ENCODE measurements at regions of chr12 and their contacts with region 1.

Region 1: GRCh38 chr12:49740930-49741881 is at the start of gene TMBIM6:
- DNase-seq: peak; percentile 100
- H3K4me3 Mint-ChIP-seq: peak within 1 kb of the TSS; percentile 99
- H3K27ac Mint-ChIP-seq: peak within 1 kb of the TSS; percentile 100
- H3K4me1 Mint-ChIP-seq: peaks cover 39% of the 10 kb centered on the region
- H3K27me3 Mint-ChIP-seq: no peaks in the 10 kb centered on the region
- total RNA-seq, gene TMBIM6: 481 to 486 TPM

Region 2: GRCh38 chr12:49264738-49265515 is 476.3 kb before region 1 on chr12 and contains the start of gene TUBA1C:
- CTCF ChIA-PET with region 1: no interaction called
- POLR2A ChIA-PET with region 1: interaction called, 3 read pairs
- intact Hi-C with region 1: loop called (anchors 10 kb)
- DNase-seq: peak; percentile 93
- H3K4me3 Mint-ChIP-seq: peak within 1 kb of the TSS; percentile 99
- H3K27ac Mint-ChIP-seq: peak within 1 kb of the TSS; percentile 99
- H3K4me1 Mint-ChIP-seq: peaks cover 47% of the 10 kb centered on the region
- H3K27me3 Mint-ChIP-seq: no peaks in the 10 kb centered on the region
- total RNA-seq, gene TUBA1C: 353 to 360 TPM

Region 3: GRCh38 chr12:49623142-49623904 is 117.9 kb before region 1 on chr12 and contains the start of gene PRPF40B:
- CTCF ChIA-PET with region 1: interaction called, 9 read pairs
- POLR2A ChIA-PET with region 1: interaction called, 11 read pairs
- intact Hi-C with region 1: no loop called
- DNase-seq: peak; percentile 91
- H3K4me3 Mint-ChIP-seq: peak within 1 kb of the TSS; percentile 78
- H3K27ac Mint-ChIP-seq: peak within 1 kb of the TSS; percentile 73
- H3K4me1 Mint-ChIP-seq: peaks cover 20% of the 10 kb centered on the region
- H3K27me3 Mint-ChIP-seq: peaks cover 3% of the 10 kb centered on the region
- total RNA-seq, gene PRPF40B: 6.2 to 8.9 TPM

Region 4: DNA sequence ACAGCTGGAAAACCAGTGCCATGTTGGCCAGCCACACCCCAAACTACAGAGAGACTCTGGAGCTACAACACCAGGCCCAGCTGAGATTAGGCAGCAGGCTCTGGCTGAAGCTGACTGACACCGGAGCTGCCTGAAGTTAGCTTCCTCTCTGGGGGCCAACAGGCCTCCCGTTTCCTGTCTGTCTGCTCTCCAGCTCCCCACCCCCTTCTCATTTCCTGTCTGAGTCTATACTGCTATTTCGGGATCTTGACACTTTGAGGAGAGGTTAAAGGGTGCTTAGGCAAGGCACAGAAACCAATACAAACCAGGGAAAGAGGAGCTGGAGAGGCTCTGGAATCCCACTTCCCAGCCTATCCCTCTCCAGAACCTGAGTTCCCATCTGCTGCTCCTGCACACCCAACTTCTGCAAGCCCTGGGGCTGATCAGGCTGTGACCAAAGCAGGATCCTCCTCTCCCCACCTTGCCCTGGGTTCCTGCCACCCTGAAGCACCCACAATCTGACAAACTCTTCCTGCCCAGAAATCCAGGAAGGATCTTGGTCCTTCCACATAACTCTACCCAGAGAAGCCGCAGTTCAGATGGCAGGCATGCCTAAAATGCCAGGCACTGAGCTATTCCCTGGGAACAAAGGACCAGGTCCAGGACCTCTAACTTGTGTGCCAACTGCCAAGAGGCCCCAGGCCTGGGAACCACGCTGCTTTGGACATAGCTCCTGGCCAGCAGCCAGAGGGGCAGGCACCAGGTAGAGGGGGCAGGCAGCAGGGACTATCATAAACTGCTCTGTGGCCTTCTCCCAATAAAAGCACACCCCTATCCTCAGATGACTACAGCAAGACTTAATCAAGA is 78.0 kb before region 1 on chr12:
- CTCF ChIA-PET with region 1: interaction called, 12 read pairs
- POLR2A ChIA-PET with region 1: interaction called, 4 read pairs
- intact Hi-C with region 1: no loop called
- DNase-seq: peak; percentile 86
- H3K4me3 Mint-ChIP-seq: peak overlapping the region; percentile 67
- H3K27ac Mint-ChIP-seq: peak overlapping the region; percentile 95
- H3K4me1 Mint-ChIP-seq: peaks cover 70% of the 10 kb centered on the region
- H3K27me3 Mint-ChIP-seq: no peaks in the 10 kb centered on the region

Region 5: GRCh38 chr12:49707128-49707811 is 33.9 kb before region 1 on chr12 and contains the start of gene FMNL3:
- CTCF ChIA-PET with region 1: interaction called, 15 read pairs
- POLR2A ChIA-PET with region 1: interaction called, 33 read pairs
- intact Hi-C with region 1: loop called (anchors 1 kb)
- DNase-seq: peak; percentile 98
- H3K4me3 Mint-ChIP-seq: peak within 1 kb of the TSS; percentile 85
- H3K27ac Mint-ChIP-seq: peak within 1 kb of the TSS; percentile 72
- H3K4me1 Mint-ChIP-seq: peaks cover 43% of the 10 kb centered on the region
- H3K27me3 Mint-ChIP-seq: peaks cover 3% of the 10 kb centered on the region
- total RNA-seq, gene FMNL3: 31.2 to 31.9 TPM

Region 6: GRCh38 chr12:49776413-49776812 is 35.2 kb after region 1 on chr12:
- CTCF ChIA-PET with region 1: interaction called, 79 read pairs
- POLR2A ChIA-PET with region 1: interaction called, 6 read pairs
- intact Hi-C with region 1: loop called (anchors 1 kb)
- DNase-seq: peak; percentile 79
- H3K4me3 Mint-ChIP-seq: no peak overlapping the region
- H3K27ac Mint-ChIP-seq: no peak overlapping the region
- H3K4me1 Mint-ChIP-seq: peaks cover 13% of the 10 kb centered on the region
- H3K27me3 Mint-ChIP-seq: peaks cover 14% of the 10 kb centered on the region

Region 7: DNA sequence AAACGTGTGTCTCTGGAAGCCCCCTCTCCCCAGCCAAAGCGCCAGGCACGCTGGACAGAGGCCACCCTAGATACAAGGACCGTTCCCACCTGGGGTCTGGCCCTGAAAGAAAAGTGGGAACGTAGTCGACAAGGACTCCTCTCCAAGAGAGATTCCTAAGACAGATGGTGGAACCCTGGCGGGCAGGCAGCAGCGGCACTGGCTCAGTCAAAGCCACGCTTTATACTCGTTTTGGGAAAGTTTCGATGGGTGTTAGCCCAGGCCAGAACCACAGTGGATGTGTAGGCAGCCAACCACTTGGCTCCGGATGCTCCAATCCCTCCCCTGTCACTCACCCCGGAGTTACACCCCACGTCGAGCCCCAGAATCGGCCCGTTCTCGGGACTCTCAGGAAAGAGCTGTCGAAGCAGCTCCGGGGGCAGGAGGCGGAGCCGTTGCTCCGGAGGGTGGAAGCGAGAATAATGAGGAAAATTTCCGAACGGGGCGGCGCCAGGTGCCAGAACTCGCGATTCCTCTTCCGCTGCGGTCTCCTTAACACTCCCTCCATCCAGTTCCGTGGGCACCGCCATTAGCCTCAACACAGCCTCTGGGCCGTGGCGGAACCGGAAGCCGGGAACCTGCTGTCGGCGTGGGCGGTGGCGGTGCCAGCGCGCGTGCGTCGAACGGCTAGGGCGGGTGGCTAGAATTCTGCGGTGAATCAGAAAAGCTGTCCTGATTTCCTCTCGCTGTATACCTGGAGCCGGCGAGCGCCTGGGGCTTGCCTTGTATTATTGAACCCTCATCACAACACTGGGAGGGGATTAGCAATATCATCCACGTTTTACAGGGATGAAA is 101.5 kb after region 1 on chr12 and contains the start of gene BCDIN3D:
- CTCF ChIA-PET with region 1: interaction called, 31 read pairs
- POLR2A ChIA-PET with region 1: interaction called, 12 read pairs
- intact Hi-C with region 1: loop called (anchors 2 kb)
- DNase-seq: peak; percentile 97
- H3K4me3 Mint-ChIP-seq: peak within 1 kb of the TSS; percentile 90
- H3K27ac Mint-ChIP-seq: peak within 1 kb of the TSS; percentile 94
- H3K4me1 Mint-ChIP-seq: peaks cover 33% of the 10 kb centered on the region
- H3K27me3 Mint-ChIP-seq: no peaks in the 10 kb centered on the region
- total RNA-seq, gene BCDIN3D: 5.8 to 6.1 TPM

Region 8: GRCh38 chr12:49959570-49960465 is 218.6 kb after region 1 on chr12:
- CTCF ChIA-PET with region 1: no interaction called
- POLR2A ChIA-PET with region 1: no interaction called
- intact Hi-C with region 1: no loop called
- DNase-seq: no peak
- H3K4me3 Mint-ChIP-seq: no peak overlapping the region
- H3K27ac Mint-ChIP-seq: no peak overlapping the region
- H3K4me1 Mint-ChIP-seq: peaks cover 8% of the 10 kb centered on the region
- H3K27me3 Mint-ChIP-seq: peaks cover 68% of the 10 kb centered on the region

Measured in activated CD4-positive, alpha-beta memory T cell treated with anti-CD3 and anti-CD28 coated beads for 36 hours (primary cell).